ENCODE measurements at regions of chr15 and their contacts with region 1.

Region 1: GRCh38 chr15:86624261-86625036 is 544.8 kb downstream of the AGBL1 start:
- DNase-seq: peak; percentile 93
- ATAC-seq: peak; percentile 100
- H3K4me3 ChIP-seq: no peak overlapping the region
- H3K27ac ChIP-seq: no peak overlapping the region
- H3K4me1 ChIP-seq: peaks cover 3% of the 10 kb centered on the region
- H3K27me3 ChIP-seq: no peaks in the 10 kb centered on the region; the same call in 1 of the 2 replicates
- CTCF ChIP-seq: peak; percentile 80

Region 2: DNA sequence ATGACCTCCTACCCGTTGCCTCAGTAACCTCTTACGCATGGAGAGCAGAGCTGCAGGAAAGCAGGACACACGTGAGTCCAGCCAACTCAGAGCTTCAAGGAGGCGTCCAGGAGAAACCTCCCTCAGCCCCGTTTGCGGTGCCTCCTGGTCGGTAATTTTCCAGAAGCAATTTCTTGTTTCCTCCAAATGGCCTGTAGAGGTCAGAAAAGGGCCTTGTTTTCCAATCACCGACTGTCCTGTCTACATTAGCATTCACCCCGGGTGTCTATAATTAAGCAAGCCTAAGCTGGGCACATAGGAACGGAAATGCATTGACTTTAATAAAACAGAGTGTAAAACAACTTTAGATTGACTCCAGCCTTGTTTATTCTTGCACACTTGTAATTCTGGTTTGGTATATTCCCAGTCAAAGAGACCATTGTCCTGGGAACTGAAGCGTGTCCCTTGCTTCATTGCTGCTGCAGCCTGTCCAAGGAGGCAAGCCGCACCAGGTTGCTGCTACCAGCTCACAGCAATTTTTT is 291.4 kb after region 1 on chr15:
- CTCF ChIA-PET with region 1: no interaction called
- POLR2A ChIA-PET with region 1: no interaction called
- in situ Hi-C with region 1: no loop called
- intact Hi-C with region 1: loop called (anchors 10 kb)
- DNase-seq: no peak
- ATAC-seq: peak; percentile 71; the same call in 1 of the 2 replicates
- H3K4me3 ChIP-seq: no peak overlapping the region
- H3K27ac ChIP-seq: no peak overlapping the region
- H3K4me1 ChIP-seq: no peaks in the 10 kb centered on the region
- H3K27me3 ChIP-seq: peaks cover 9% of the 10 kb centered on the region
- CTCF ChIP-seq: peak; percentile 69

Region 3: GRCh38 chr15:88246666-88247446 is 1622.4 kb after region 1 on chr15:
- CTCF ChIA-PET with region 1: no interaction called
- POLR2A ChIA-PET with region 1: no interaction called
- in situ Hi-C with region 1: no loop called
- intact Hi-C with region 1: loop called (anchors 10 kb)
- DNase-seq: peak; percentile 39
- ATAC-seq: peak; percentile 92
- H3K4me3 ChIP-seq: peak overlapping the region in 1 of 2 experiments; percentile 18; a peak in 1 of 4 replicates
- H3K27ac ChIP-seq: no peak overlapping the region
- H3K4me1 ChIP-seq: no peaks in the 10 kb centered on the region
- H3K27me3 ChIP-seq: peaks cover 2% of the 10 kb centered on the region; the same call in 1 of the 2 replicates
- CTCF ChIP-seq: peak; percentile 96

Measured in Panc1 (cell line).